Head of caudate nucleus (tissue), 42 donors: ENCODE measurements at regions of chr7 and their contacts with region 1.

Region 1: DNA sequence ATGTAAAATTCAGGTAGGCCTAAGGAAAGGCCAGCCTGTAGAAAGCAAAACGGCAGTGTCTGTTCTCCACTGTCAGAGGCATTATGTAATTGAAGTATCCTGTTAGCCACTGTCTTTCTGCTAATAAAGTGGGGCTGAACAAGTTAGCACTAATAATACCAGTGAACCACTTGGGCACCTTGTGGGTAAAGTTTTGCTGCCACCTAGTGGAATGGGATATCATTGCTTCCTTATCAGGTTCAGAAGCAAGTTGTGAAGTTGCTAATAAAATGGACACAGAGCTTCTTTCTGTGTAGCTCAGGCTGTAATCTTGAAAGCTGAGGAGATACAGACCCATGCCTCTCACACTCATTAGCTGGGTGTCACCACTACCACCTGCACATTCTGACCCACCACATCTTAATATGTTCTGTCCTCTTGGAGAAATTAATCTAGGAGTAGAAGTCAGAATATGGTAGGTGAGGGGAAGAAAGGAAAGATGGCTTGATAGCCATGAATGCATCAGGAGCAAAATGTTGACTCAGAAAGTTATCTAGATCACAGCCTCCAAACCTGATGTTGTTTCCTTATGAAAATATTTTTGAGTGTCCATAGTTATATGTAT is 175.1 kb downstream of the SEPTIN7 start:
- DNase-seq: peak in 28 of 42 donors; percentile 20 to 87 (median 65)

Region 2: DNA sequence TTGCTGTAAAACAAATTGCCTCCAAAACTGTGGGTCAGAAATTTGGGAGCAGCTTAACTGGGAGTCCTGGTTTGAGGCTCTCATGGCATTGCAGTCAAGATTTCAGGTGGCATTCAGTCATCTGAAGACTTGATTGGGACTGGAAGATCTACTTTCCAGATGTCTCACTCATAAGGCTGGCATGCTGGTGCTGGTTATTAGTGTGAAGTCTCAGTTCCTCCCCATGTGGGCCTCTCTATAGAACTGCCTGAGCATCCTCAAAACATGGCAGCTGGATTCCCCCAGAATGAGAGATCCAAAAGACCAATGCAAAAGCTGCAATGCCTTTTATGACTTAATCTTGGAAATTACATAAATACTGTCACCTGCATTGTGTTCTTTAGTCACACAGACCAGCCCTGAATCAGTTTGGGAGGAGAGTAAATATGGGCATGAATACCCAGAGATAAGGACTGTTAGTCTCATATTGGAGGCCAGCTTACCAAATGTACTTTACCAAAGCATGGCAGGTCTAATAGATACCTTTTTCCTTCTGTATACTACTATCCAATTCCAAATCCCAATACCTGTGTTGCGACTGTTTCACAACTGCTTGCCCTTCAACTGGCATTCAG is 274.6 kb before region 1 on chr7:
- intact Hi-C with region 1: loop called (anchors 10 kb)
- DNase-seq: no peak

Region 3: GRCh38 chr7:36244429-36244828 is 268.5 kb after region 1 on chr7:
- intact Hi-C with region 1: no loop called
- DNase-seq: no peak